ENCODE measurements at regions of chr4 and their contacts with region 1.

Region 1: DNA sequence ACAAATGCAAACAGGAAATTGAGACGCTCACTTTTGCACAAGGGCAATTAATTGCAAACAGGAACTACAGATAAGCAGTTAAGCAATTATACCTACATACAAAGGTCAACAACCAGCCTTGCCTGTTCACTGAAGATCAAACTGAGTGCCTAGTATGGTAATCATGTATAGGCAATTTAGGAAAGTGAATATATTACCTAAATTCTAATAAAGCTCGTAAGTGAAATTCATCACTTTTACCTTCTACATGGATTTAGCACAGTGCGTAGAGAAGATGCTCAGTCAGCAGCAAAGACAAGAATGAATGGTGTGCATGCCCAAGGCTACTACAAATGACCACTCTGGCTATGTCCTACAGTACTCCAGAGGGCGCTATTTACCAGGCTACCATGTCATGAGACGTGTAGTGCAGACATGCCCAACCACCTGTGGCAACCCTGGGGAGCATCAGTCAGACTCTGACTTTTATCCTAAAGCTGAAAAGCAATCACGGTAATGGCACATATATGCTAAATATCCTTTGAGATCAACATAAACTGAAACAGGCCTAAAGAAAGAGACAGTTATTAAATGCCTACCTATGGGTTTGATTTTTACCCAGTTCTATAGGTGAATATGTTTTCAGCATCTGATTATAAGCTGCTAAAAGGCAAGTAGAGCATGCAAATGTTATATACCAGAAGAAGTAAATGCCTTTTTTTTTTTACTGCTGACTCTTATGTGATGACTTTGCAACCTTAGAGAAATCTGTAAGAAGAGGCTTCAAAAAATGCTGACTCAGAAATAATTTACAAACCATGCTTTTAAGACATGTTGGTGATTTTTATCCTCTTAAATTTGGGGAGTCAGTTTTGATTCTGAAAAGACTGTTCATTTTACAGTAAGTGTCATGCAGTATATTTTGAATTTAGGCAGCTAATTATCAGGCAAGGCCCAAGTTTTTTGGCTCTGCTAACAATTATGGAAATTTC is 178.0 kb downstream of the PPP3CA start:
- DNase-seq: peak; percentile 87
- H3K4me3 Mint-ChIP-seq: no peak overlapping the region
- H3K27ac Mint-ChIP-seq: no peak overlapping the region
- H3K4me1 Mint-ChIP-seq: peaks cover 2% of the 10 kb centered on the region
- H3K27me3 Mint-ChIP-seq: no peaks in the 10 kb centered on the region

Region 2: DNA sequence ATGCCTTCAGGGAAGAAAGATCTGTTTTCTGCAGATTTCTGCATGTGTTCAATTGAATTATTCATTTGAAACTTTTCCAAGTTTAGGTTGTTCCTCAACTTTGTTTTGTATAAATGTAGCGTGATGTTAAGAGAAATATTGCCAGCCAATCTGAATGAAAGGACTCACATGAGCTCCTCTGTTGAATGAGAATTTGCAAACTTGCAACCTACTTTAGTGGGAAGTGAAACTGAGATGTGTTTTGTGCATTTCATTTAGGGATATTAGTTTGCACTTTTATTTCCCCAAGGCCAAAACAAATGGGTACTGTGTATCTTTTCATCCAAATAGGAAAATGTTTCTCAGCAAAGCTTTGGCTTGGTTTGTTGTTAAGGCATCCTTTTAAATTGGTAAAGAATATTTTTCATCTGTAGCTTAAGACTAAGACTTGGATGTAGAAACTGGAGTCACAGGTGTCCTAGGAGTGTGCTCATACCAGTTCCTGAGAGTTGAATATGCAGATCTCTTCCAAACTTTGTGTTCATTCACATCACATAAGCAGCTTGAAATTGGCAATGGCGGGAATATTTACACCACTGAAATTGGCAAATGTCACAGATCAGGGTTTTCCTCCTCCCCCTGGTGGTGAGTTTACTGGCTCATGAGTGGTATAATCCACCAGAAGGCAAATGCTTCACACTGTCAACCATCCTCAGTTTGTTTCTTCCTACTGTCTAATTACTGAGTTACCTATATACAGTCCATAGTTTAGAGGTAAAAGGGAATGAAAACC is 427.6 kb after region 1 on chr4:
- intact Hi-C with region 1: loop called (anchors 1 kb)
- DNase-seq: peak; percentile 73
- H3K4me3 Mint-ChIP-seq: no peak overlapping the region
- H3K27ac Mint-ChIP-seq: no peak overlapping the region
- H3K4me1 Mint-ChIP-seq: peaks cover 2% of the 10 kb centered on the region
- H3K27me3 Mint-ChIP-seq: peaks cover 5% of the 10 kb centered on the region

Region 3: DNA sequence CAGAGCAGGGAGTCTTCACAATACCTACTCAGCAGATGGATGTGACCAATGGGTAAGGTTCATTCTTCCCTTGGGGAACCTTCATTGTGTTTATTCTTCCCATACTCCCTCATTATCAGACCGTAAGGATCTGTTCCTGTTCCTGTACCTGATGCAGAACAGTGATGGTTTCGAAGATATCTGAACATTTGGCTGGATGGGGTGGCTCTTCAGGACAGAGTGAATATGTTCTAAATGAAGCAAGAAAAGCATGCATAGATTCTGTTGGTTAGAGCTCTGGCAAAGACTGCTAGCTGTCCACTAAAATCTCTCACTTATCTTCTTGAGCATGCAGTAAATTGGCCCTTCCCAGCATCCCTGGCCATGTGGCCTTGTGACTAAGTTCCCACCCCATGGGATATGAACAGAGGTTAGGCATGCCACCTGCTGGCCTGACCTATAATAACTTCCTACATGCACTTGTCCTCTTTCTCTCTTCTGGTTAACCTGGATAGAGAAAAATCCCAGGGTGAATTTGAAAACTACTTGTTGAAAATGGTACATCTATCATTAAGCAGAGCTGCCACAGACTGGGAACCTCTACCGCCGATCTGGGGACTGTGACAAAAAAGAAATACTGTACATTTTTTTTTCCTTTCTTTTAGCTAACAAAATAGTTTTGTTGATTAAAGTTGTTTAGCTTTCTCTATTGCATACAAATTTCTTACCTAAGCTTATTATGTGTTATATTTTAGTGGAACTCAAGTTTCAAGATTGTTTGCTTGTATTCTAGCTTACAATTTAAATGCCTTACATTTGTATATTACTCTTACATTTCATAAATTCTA is 561.2 kb after region 1 on chr4:
- intact Hi-C with region 1: loop called (anchors 1 kb)
- DNase-seq: peak; percentile 82
- H3K4me3 Mint-ChIP-seq: no peak overlapping the region
- H3K27ac Mint-ChIP-seq: no peak overlapping the region
- H3K4me1 Mint-ChIP-seq: peaks cover 5% of the 10 kb centered on the region
- H3K27me3 Mint-ChIP-seq: peaks cover 11% of the 10 kb centered on the region

Region 4: GRCh38 chr4:102399021-102399420 is 1229.7 kb after region 1 on chr4:
- intact Hi-C with region 1: no loop called
- DNase-seq: no peak
- H3K4me3 Mint-ChIP-seq: no peak overlapping the region
- H3K27ac Mint-ChIP-seq: no peak overlapping the region
- H3K4me1 Mint-ChIP-seq: no peaks in the 10 kb centered on the region
- H3K27me3 Mint-ChIP-seq: peaks cover 2% of the 10 kb centered on the region

Measured in activated CD4-positive, alpha-beta T cell treated with anti-CD3 and anti-CD28 coated beads, Interleukin-2, amount 10 ng/mL, durations not matched to agents 24 days and 14 days (primary cell).